ENCODE measurements at regions of chr11 and their contacts with region 1.

Region 1: DNA sequence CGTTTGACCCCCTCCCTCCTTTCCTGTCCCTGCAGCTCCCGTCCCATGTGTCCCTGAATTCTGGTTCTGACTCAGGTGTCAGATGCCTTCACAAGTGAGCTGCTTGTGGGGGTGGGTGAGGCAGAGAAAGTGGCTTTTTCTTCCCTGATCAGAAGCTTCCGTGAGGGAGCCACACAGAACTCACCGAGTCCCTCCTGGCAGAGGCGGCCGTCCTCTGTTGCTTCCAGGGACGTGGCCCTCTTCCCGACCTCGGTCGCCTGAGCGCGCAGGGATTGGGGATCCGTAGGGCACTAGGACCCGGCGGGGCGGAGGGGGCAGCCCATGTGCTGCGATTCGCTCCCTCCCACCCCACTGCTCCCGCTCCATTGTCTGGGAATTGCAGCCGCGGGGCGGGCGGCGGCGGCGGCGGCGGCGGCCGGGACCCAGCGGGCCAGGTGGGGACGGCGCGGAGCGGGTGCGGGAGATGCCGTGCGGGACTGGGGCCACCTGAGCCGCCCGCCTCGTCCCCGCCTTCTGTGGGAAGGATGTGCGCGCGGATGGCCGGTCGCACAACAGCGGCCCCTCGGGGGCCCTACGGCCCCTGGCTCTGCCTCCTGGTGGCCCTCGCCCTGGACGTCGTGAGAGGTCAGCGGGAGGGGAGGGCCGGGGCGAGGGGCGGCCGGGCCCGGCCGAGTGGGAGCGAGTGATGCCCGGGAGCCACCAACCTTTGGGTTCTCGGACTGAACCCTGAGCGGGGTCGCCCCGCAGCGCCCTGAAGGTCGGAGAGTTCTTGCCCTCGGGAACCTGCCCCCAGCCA is at the start of gene TMEM132A:
- DNase-seq: peak; percentile 86
- ATAC-seq: peak; percentile 85
- total RNA-seq, gene TMEM132A: 6.3 TPM

Region 2: DNA sequence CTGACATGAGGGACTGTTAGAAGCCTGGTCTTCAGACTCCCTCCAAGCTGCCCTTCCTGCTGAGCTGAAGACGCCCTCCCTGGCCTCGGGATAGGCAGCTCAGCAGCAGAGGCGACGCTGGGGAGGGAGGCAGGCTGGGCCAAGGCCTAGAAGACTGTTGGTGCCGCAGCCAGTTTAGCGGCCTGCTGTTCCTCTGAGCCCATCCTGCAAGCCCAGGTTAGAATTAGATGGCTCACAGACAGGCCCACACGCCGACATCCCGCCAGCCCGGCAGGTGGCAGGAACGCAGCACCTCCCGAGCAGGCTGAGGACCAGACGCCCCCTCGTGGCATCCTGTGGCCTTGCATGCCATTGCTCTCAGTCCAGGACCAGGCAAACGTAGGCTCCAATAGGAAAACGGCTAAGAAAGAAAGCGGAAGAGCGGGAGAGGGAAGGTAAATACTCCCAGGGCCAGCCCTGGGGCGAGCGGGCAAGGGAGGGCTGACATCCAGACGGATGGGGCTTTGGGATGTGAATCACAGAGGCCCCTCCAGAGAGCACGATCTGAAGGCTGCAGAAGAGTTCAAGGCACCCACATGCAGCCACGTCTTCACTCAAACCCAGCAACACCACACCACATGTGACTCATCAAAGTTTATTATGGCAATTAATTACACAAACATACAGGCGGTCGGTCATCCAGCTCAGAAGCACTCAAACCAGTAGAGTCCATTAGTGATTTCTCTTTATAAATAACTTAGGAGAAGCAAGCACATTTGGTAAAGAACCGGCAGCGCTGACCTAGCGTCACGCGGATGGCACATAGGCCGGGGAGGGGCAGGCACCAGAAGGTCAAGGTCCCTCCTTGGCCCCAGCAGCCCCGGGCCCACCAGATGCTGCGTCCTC is 205.6 kb after region 1 on chr11:
- intact Hi-C with region 1: loop called (anchors 5 kb)
- DNase-seq: peak; percentile 91
- ATAC-seq: peak; percentile 81

Region 3: DNA sequence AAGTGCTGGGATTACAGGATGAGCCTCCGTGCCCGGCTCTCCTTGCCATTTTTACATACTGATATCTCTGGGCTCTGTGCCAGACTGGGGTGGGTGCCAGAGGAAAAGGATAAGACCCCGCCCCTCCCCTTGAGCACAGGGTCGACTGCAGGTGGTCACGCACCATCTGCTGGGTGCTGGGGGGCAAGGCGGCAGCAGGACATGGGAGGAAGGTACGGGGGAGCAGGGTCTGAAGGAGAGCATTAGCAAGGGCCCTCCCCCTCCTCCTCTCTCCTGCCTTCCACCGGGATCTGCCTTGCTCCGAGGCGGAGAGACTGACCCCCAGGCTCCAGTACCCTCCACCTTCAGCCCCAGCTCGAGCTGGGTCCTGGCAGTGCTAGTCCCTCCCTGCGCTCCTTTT is 269.3 kb after region 1 on chr11:
- intact Hi-C with region 1: no loop called
- DNase-seq: no peak
- ATAC-seq: no peak